Psoas muscle (tissue), 8 donors: ENCODE measurements at regions of chr1 and their contacts with region 1.

Region 1: GRCh38 chr1:231421993-231422764 is at the start of gene EGLN1:
- DNase-seq: peak; percentile 88 to 92
- ATAC-seq: peak; percentile 71 to 89 (median 86)
- H3K4me3 ChIP-seq: peak within 1 kb of the TSS; percentile 91
- H3K27ac ChIP-seq: peak within 1 kb of the TSS; percentile 99
- H3K4me1 ChIP-seq: peaks cover 31% of the 10 kb centered on the region
- H3K27me3 ChIP-seq: no peaks in the 10 kb centered on the region
- CTCF ChIP-seq: no peak
- total RNA-seq, gene EGLN1: 158 to 532 (median 327) TPM

Region 2: DNA sequence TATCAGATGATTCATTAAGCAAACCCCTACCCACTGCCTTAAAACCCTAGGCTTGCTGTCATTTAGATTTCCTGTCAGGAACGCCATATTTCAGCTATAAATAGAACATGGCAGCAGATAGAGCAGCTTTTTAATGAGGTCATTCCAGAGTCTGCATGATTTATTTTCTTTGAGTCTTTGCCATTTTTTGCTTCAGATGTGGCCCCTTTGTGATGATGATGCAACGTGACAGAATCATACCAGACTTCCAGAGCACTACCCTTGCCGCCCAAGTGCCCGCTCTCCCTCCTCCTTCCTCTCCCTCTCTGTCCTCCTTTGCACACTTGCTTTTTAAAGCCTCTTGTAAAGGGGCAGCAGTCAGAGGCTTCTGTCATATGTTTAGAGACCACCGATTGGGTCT is 315.8 kb before region 1 on chr1:
- intact Hi-C with region 1: no loop called
- DNase-seq: no peak
- ATAC-seq: peak; percentile 84 to 97 (median 90)
- H3K4me3 ChIP-seq: no peak overlapping the region
- H3K27ac ChIP-seq: no peak overlapping the region
- H3K4me1 ChIP-seq: peaks cover 12% of the 10 kb centered on the region
- H3K27me3 ChIP-seq: no peaks in the 10 kb centered on the region
- CTCF ChIP-seq: no peak

Region 3: GRCh38 chr1:231301990-231302389 is 120.2 kb before region 1 on chr1:
- intact Hi-C with region 1: no loop called
- DNase-seq: no peak
- ATAC-seq: no peak
- H3K4me3 ChIP-seq: no peak overlapping the region
- H3K27ac ChIP-seq: no peak overlapping the region
- H3K4me1 ChIP-seq: no peaks in the 10 kb centered on the region
- H3K27me3 ChIP-seq: no peaks in the 10 kb centered on the region
- CTCF ChIP-seq: no peak

Region 4: GRCh38 chr1:231364192-231364591 is 58.0 kb before region 1 on chr1:
- intact Hi-C with region 1: loop called (anchors 5 kb)
- DNase-seq: no peak
- ATAC-seq: no peak
- H3K4me3 ChIP-seq: no peak overlapping the region
- H3K27ac ChIP-seq: no peak overlapping the region
- H3K4me1 ChIP-seq: peaks cover 9% of the 10 kb centered on the region
- H3K27me3 ChIP-seq: no peaks in the 10 kb centered on the region
- CTCF ChIP-seq: no peak

Region 5: GRCh38 chr1:231376875-231377549 is 45.2 kb before region 1 on chr1:
- intact Hi-C with region 1: loop called (anchors 5 kb)
- DNase-seq: no peak
- ATAC-seq: peak; percentile 42 to 67 (median 58)
- H3K4me3 ChIP-seq: no peak overlapping the region
- H3K27ac ChIP-seq: peak overlapping the region; percentile 64
- H3K4me1 ChIP-seq: peaks cover 62% of the 10 kb centered on the region
- H3K27me3 ChIP-seq: no peaks in the 10 kb centered on the region
- CTCF ChIP-seq: no peak

Region 6: GRCh38 chr1:231497629-231498152 is 75.5 kb after region 1 on chr1:
- intact Hi-C with region 1: loop called in 1 of 2 experiments (anchors 5 kb)
- DNase-seq: no peak
- ATAC-seq: no peak
- H3K4me3 ChIP-seq: no peak overlapping the region
- H3K27ac ChIP-seq: no peak overlapping the region
- H3K4me1 ChIP-seq: peaks cover 17% of the 10 kb centered on the region
- H3K27me3 ChIP-seq: no peaks in the 10 kb centered on the region
- CTCF ChIP-seq: no peak

Region 7: GRCh38 chr1:231603598-231604275 is 181.6 kb after region 1 on chr1:
- intact Hi-C with region 1: loop called in 1 of 2 experiments (anchors 5 kb)
- DNase-seq: no peak
- ATAC-seq: peak; percentile 34 to 83 (median 60)
- H3K4me3 ChIP-seq: peak overlapping the region; percentile 62
- H3K27ac ChIP-seq: no peak overlapping the region
- H3K4me1 ChIP-seq: peaks cover 8% of the 10 kb centered on the region
- H3K27me3 ChIP-seq: no peaks in the 10 kb centered on the region
- CTCF ChIP-seq: peak; percentile 72

Region 8: GRCh38 chr1:231806623-231807495 is 384.7 kb after region 1 on chr1:
- intact Hi-C with region 1: no loop called
- DNase-seq: peak; percentile 35 to 70
- ATAC-seq: peak; percentile 86 to 94 (median 88)
- H3K4me3 ChIP-seq: no peak overlapping the region
- H3K27ac ChIP-seq: no peak overlapping the region
- H3K4me1 ChIP-seq: no peaks in the 10 kb centered on the region
- H3K27me3 ChIP-seq: no peaks in the 10 kb centered on the region
- CTCF ChIP-seq: peak; percentile 63